ENCODE measurements at regions of chr16 and their contacts with region 1.

Region 1: GRCh38 chr16:80526425-80527061 is 14.2 kb upstream of the DYNLRB2 start:
- DNase-seq: peak; percentile 66
- H3K4me3 Mint-ChIP-seq: no peak overlapping the region
- H3K27ac Mint-ChIP-seq: no peak overlapping the region
- H3K4me1 Mint-ChIP-seq: peaks cover 12% of the 10 kb centered on the region
- H3K27me3 Mint-ChIP-seq: peaks cover 12% of the 10 kb centered on the region

Region 2: GRCh38 chr16:80466024-80466987 is 60.2 kb before region 1 on chr16:
- CTCF ChIA-PET with region 1: interaction called, 13 read pairs
- POLR2A ChIA-PET with region 1: no interaction called
- DNase-seq: peak; percentile 64
- H3K4me3 Mint-ChIP-seq: no peak overlapping the region
- H3K27ac Mint-ChIP-seq: no peak overlapping the region
- H3K4me1 Mint-ChIP-seq: peaks cover 1% of the 10 kb centered on the region
- H3K27me3 Mint-ChIP-seq: peaks cover 23% of the 10 kb centered on the region

Region 3: DNA sequence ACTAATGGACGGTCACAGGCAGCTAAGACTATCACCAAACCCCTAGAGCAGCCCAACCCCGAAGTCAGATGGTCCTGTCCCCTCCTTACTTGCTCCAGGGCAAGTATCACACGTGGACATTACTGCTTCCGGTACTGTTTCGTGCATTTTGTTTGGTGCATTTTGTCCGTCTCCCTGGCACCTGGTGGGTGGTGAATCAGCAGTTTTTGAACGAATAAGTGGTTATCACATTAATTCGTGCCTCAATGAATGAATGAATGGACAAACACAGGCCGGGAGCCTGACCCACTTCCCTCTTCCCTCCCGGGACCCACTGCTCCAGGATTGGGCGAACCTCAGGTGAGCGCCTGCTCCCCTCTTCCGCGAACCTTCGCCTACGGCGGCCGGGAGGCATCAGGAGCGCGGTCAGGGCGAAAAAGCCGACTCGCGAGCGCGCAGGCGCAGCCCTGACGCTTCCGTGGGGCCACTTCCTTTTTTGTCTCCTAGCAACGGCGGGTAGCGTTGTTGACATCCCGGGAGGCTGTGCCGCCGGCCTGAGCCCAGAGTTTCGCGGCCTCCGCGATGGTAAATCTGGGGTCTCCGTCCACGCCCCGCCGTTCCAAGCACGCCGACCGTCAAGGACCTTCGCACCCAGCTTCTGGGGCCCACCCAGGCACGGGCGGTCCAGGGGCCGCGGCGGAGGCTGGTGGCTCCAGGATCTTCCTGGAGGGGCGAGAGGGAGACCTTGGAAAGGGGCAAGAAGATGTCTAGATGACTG is 14.2 kb after region 1 on chr16 and contains the start of gene DYNLRB2:
- CTCF ChIA-PET with region 1: interaction called, 20 read pairs
- POLR2A ChIA-PET with region 1: no interaction called
- DNase-seq: peak; percentile 95
- H3K4me3 Mint-ChIP-seq: peak within 1 kb of the TSS; percentile 87
- H3K27ac Mint-ChIP-seq: peak within 1 kb of the TSS; percentile 85
- H3K4me1 Mint-ChIP-seq: peaks cover 39% of the 10 kb centered on the region
- H3K27me3 Mint-ChIP-seq: no peaks in the 10 kb centered on the region
- total RNA-seq, gene DYNLRB2: not detected

Region 4: DNA sequence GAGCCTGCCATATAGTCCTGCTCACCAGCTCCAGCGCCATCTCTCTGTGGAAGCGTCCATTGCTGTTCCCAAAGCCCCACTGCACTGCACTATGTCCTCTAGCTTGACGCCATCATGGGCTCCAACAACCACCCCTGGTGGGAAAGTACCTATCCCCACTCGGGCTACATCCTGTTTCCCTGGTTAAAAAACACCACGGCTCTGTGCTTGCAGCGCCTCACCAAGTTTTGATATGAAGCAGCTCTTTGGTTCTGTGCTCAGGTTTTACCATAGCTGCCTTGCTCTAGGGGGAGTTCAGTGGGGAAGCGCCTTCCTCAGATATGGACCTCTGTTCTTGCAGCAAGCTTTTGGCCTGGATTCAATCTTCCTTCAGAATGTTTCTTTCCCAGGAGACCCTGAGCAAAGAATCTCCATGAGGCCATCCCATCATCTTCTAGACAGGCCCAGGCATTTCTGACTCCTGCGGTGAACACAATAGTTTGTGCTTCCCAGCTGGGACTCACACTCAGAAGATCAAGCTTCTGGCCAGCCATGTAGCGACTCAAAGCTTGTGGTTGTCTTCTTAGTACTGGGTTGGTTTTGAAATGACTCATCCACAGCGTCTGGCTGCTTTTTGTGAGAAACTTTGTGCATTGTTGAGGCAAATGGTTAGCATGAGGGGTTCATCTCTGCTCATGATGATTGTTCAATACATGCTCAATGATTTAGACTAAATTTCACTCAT is 53.7 kb after region 1 on chr16:
- CTCF ChIA-PET with region 1: interaction called, 23 read pairs
- POLR2A ChIA-PET with region 1: interaction called, 6 read pairs
- DNase-seq: peak; percentile 85
- H3K4me3 Mint-ChIP-seq: peak overlapping the region; percentile 69
- H3K27ac Mint-ChIP-seq: peak overlapping the region; percentile 99
- H3K4me1 Mint-ChIP-seq: peaks cover 64% of the 10 kb centered on the region
- H3K27me3 Mint-ChIP-seq: no peaks in the 10 kb centered on the region

Region 5: DNA sequence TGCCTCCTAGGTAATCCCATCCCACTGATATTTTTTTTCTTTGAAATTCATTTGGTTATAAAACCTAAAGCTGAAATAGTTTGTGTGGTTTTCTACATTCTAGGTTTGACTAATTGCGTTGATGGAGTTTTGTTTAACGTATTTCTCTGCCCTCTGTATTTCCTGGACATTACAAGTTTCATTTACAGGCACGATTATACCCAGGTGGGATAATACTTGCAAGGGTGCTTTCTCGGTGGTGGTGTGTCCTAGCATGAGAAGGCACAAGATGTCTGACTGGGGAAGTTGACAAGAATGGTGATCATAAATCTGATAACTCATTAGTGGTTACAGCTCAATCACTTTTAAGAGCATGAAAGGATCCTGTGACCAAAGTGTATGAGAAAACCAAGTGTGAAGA is 59.2 kb after region 1 on chr16:
- CTCF ChIA-PET with region 1: interaction called, 23 read pairs
- POLR2A ChIA-PET with region 1: interaction called, 6 read pairs
- DNase-seq: no peak
- H3K4me3 Mint-ChIP-seq: no peak overlapping the region
- H3K27ac Mint-ChIP-seq: peak overlapping the region; percentile 28
- H3K4me1 Mint-ChIP-seq: peaks cover 65% of the 10 kb centered on the region
- H3K27me3 Mint-ChIP-seq: peaks cover 28% of the 10 kb centered on the region

Region 6: GRCh38 chr16:80643221-80643620 is 116.7 kb after region 1 on chr16:
- CTCF ChIA-PET with region 1: no interaction called
- POLR2A ChIA-PET with region 1: no interaction called
- DNase-seq: no peak
- H3K4me3 Mint-ChIP-seq: no peak overlapping the region
- H3K27ac Mint-ChIP-seq: no peak overlapping the region
- H3K4me1 Mint-ChIP-seq: peaks cover 4% of the 10 kb centered on the region
- H3K27me3 Mint-ChIP-seq: no peaks in the 10 kb centered on the region

Region 7: DNA sequence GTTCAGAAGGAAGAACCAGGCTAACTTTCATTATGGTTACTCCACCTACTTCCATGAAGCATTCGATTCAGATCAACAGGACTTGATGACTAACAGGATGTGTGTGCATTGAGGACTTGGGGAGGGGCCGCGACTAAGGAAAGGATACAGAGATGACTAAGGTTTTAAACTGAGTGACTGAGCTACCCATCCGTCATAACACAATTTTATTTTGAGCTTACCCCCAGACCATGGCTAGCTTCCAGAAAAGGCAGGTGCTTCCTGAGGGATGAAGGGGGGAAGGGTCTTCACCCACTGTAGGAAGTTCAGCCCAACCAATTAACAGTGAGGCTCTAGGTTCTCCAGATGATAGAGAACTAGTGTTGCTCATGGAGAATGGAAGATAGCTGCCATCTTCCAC is 280.4 kb after region 1 on chr16:
- CTCF ChIA-PET with region 1: interaction called, 25 read pairs
- POLR2A ChIA-PET with region 1: interaction called, 5 read pairs
- DNase-seq: peak; percentile 80
- H3K4me3 Mint-ChIP-seq: peak overlapping the region; percentile 40
- H3K27ac Mint-ChIP-seq: peak overlapping the region; percentile 92
- H3K4me1 Mint-ChIP-seq: peaks cover 44% of the 10 kb centered on the region
- H3K27me3 Mint-ChIP-seq: no peaks in the 10 kb centered on the region

Region 8: DNA sequence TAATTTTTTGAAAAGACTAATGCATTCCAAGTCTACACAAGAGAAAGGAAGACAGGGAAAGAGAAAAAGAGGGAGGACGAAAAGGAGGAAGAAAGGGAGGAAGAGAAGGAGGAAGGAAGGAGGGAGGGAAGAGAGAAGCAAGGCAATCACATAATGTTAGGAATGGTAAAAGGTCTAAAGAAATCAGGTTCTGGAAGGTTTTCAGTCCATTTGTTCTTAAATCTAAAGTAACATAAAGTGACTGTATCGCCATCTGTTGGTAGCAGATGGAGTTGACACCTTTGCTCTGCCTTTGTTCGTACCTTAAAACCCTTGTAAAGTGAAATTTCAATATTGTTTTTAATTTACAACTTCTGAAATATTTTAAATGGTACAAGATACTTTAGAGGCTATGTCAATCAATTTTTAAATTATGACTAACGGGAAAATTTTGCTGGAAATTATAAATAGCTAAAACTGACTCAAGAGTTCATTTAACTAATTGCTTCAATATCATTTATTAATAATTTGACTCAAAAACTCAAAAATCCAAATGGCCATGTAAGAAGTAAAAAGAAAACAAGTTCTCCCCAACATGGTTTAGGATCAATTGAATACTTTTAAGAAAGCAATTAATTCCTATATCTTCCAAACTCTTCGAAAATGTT is 298.3 kb after region 1 on chr16:
- CTCF ChIA-PET with region 1: interaction called, 119 read pairs
- POLR2A ChIA-PET with region 1: interaction called, 4 read pairs
- DNase-seq: peak; percentile 52
- H3K4me3 Mint-ChIP-seq: no peak overlapping the region
- H3K27ac Mint-ChIP-seq: no peak overlapping the region
- H3K4me1 Mint-ChIP-seq: peaks cover 1% of the 10 kb centered on the region
- H3K27me3 Mint-ChIP-seq: peaks cover 17% of the 10 kb centered on the region

Measured in activated CD4-positive, alpha-beta memory T cell treated with anti-CD3 and anti-CD28 coated beads, Interleukin-2, amount 10 ng/mL, durations not matched to agents 7 days and 5 days (primary cell).